ENCODE measurements at regions of chr2 and their contacts with region 1.

Region 1: GRCh38 chr2:151289369-151290088 is at the start of gene NMI:
- DNase-seq: peak; percentile 56
- ATAC-seq: peak; percentile 85
- H3K4me3 ChIP-seq: peak within 1 kb of the TSS; percentile 75
- H3K27ac ChIP-seq: peak within 1 kb of the TSS; percentile 82
- H3K4me1 ChIP-seq: peaks cover 15% of the 10 kb centered on the region
- H3K27me3 ChIP-seq: no peaks in the 10 kb centered on the region
- CTCF ChIP-seq: peak; percentile 32; the same call in 1 of the 2 replicates
- total RNA-seq, gene NMI: 9.9 and 19.4 TPM in 2 replicates

Region 2: DNA sequence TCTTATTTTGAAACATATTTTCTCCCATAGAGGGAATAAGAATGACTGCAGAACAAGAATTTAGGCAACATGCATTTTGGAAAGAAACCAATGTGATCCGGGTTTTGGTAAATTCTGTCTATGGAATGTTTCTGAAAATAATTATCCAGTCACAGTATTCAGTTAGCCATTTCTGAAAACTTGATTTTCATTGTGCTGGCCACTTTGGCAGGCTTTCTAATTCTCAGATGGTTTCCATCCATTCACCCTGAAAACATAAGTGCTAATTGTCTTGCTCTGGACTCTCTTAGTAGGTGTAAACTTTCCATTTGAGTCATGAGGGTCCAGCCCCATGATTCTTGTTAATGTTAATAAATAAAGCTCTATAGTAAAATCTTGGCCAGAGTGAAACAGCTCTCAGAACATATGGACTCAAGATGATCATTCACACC is 204.3 kb before region 1 on chr2:
- CTCF ChIA-PET with region 1: no interaction called
- POLR2A ChIA-PET with region 1: no interaction called
- intact Hi-C with region 1: no loop called
- DNase-seq: no peak
- ATAC-seq: no peak
- H3K4me3 ChIP-seq: no peak overlapping the region
- H3K27ac ChIP-seq: no peak overlapping the region
- H3K4me1 ChIP-seq: no peaks in the 10 kb centered on the region
- H3K27me3 ChIP-seq: no peaks in the 10 kb centered on the region
- CTCF ChIP-seq: no peak

Region 3: DNA sequence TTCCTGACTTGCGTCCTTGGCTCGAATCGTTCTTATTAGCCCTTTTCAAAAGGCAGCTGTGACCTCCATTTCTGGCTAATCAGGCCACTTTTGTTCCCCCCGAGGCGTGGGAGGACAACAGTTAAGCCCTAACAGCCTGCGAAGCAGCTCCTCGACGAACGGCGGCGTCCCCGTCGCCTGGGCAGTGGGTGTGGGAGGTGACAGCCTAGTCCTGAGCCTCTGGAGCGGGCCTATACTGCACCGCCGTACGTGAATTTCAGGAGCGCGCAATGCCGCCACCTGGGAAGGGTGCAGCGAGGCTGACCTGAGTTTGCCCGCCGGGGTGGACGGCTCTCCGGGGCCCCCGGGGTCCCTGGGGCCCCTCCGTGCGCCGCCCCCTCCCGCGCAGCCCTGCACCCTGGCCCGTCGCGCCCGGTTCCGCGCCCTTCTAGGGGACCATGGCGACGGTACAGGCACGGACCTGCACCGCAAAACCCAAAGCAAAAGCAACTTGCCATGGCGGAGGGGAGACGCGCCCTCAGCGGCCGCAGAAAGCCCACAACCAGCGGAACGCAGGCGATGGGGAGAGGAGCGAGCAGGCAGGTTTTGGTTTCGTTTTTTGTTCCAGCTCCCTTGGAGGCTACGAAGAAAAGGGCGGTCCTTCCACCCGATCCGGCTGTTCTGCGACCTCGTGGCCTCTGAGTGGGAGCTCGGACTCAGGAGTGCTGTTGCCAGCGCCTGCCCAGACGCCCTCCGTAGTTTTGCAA is 28.1 kb before region 1 on chr2 and contains the start of gene RBM43:
- CTCF ChIA-PET with region 1: interaction called, 9 read pairs
- POLR2A ChIA-PET with region 1: interaction called, 14 read pairs
- intact Hi-C with region 1: loop called (anchors 1 kb)
- DNase-seq: peak; percentile 85
- ATAC-seq: peak; percentile 90
- H3K4me3 ChIP-seq: peak within 1 kb of the TSS; percentile 81
- H3K27ac ChIP-seq: peak within 1 kb of the TSS; percentile 75
- H3K4me1 ChIP-seq: peaks cover 14% of the 10 kb centered on the region
- H3K27me3 ChIP-seq: no peaks in the 10 kb centered on the region
- CTCF ChIP-seq: 0 out of 2 replicates have a peak, but pooled peaks have one; percentile 31
- total RNA-seq, gene RBM43: 2.5 and 2.6 TPM in 2 replicates

Region 4: DNA sequence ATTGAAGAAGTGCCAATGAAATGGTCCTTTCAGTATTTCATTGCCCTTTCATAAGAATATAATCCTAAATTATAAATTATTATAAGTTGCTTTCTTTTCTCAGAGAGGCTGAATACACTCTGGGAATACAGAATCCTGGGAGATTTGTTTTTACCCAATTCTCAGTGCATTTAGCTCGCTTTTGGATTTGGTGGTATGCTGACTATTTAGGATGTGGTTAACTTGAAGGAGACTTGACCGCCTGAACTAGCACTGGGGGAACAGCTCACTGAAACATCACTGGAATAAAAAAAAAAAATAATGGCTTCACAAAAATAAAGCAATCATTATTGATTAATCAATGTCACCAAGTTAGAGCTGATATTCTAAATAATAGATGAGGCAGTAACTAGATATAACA is 78.0 kb after region 1 on chr2:
- CTCF ChIA-PET with region 1: no interaction called
- POLR2A ChIA-PET with region 1: interaction called, 19 read pairs
- intact Hi-C with region 1: no loop called
- DNase-seq: no peak
- ATAC-seq: no peak
- H3K4me3 ChIP-seq: no peak overlapping the region
- H3K27ac ChIP-seq: no peak overlapping the region
- H3K4me1 ChIP-seq: no peaks in the 10 kb centered on the region
- H3K27me3 ChIP-seq: no peaks in the 10 kb centered on the region
- CTCF ChIP-seq: no peak

Region 5: DNA sequence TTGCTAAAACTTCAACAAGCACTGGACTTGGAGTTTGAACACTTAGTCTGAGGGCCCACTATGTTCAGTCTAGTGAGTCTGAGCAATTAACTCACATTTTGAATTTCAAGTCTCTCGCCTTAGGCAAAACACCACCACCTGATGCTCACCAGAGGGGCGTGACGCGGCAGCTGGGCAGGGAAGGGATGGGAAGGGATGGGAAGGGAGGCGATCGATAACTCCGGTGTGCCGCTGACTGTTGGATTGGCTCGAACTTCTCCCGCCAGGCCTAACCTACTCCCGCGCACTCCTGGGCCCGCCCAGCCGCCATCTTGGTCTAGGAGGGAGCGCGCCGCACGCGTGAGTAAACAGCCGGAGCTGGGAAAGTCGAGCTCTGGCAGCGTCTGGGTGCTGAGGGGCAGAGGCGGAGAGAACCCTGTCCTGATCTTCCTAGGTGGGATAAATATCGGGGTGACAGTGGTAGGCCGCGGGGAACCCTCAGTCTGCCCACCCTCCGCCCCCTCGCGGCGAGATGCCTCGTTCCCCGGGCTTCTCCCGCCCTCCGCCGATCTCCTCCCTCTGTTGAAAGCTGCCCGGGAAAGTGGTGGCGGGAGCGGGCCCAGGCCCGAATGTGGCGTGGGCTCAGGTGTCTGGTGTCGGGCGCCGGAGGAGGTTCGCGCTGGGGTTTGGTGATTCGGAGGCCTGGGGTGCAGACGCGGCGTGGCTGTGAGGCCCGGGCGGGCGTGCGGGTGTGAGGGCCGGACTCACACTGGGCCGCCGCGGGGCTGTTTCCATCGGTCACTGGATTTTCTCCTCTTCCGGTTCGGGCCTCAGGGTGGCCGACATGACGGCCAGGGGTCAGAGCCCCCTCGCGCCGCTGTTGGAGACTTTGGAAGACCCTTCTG is 120.3 kb after region 1 on chr2 and contains the start of gene RIF1:
- CTCF ChIA-PET with region 1: no interaction called
- POLR2A ChIA-PET with region 1: no interaction called
- intact Hi-C with region 1: loop called (anchors 2 kb)
- DNase-seq: peak; percentile 96
- ATAC-seq: peak; percentile 97
- H3K4me3 ChIP-seq: peak within 1 kb of the TSS; percentile 100
- H3K27ac ChIP-seq: peak within 1 kb of the TSS; percentile 77
- H3K4me1 ChIP-seq: 0 out of 2 replicates have a peak, but pooled peaks cover 7% of the 10 kb centered on the region
- H3K27me3 ChIP-seq: no peaks in the 10 kb centered on the region
- CTCF ChIP-seq: peak; percentile 56
- total RNA-seq, gene RIF1: 33.6 and 37.1 TPM in 2 replicates

Region 6: GRCh38 chr2:151437630-151438029 is 148.1 kb after region 1 on chr2:
- CTCF ChIA-PET with region 1: no interaction called
- POLR2A ChIA-PET with region 1: no interaction called
- intact Hi-C with region 1: loop called (anchors 5 kb)
- DNase-seq: peak; percentile 61
- ATAC-seq: peak; percentile 35
- H3K4me3 ChIP-seq: no peak overlapping the region
- H3K27ac ChIP-seq: no peak overlapping the region
- H3K4me1 ChIP-seq: no peaks in the 10 kb centered on the region
- H3K27me3 ChIP-seq: no peaks in the 10 kb centered on the region
- CTCF ChIP-seq: peak; percentile 58

Measured in PC-3 (cell line).